ENCODE measurements at regions of chr3 and their contacts with region 1.

Region 1: GRCh38 chr3:14124615-14125190 is at the starts of genes CHCHD4 and TMEM43:
- DNase-seq: peak; percentile 94 to 96
- H3K4me3 ChIP-seq: peak within 1 kb of the TSS; percentile 90 to 97 (median 91)
- H3K27ac ChIP-seq: peak within 1 kb of the TSS; percentile 41
- H3K4me1 ChIP-seq: peaks cover 0 to 14% (median 10%) of the 10 kb centered on the region in 4 experiments; a peak in 6 of 7 replicates
- H3K27me3 ChIP-seq: no peaks in the 10 kb centered on the region
- CTCF ChIP-seq: no peak
- EP300 ChIP-seq: no peak
- POLR2A ChIP-seq: peak in 1 of 2 experiments; percentile 53; a peak in 2 of 3 replicates
- RAD21 ChIP-seq: no peak
- total RNA-seq, gene CHCHD4: 20.6 and 22.3 TPM in 2 replicates
- total RNA-seq, gene TMEM43: 27.0 and 27.4 TPM in 2 replicates

Region 2: GRCh38 chr3:13895155-13896105 is 229.3 kb before region 1 on chr3:
- CTCF ChIA-PET with region 1: interaction called, 123 read pairs
- POLR2A ChIA-PET with region 1: interaction called, 46 read pairs
- DNase-seq: peak; percentile 82 to 98
- H3K4me3 ChIP-seq: peak overlapping the region; percentile 57 to 79 (median 64)
- H3K27ac ChIP-seq: no peak overlapping the region
- H3K4me1 ChIP-seq: peaks cover 0 to 13% (median 8%) of the 10 kb centered on the region in 4 experiments; a peak in 4 of 7 replicates
- H3K27me3 ChIP-seq: peaks cover 8 to 24% (median 20%) of the 10 kb centered on the region in 4 experiments
- CTCF ChIP-seq: no peak
- EP300 ChIP-seq: no peak
- POLR2A ChIP-seq: no peak
- RAD21 ChIP-seq: no peak

Region 3: GRCh38 chr3:13932578-13933295 is 192.0 kb before region 1 on chr3:
- CTCF ChIA-PET with region 1: no interaction called
- POLR2A ChIA-PET with region 1: no interaction called
- DNase-seq: no peak
- H3K4me3 ChIP-seq: no peak overlapping the region
- H3K27ac ChIP-seq: no peak overlapping the region
- H3K4me1 ChIP-seq: no peaks in the 10 kb centered on the region
- H3K27me3 ChIP-seq: no peaks in the 10 kb centered on the region
- CTCF ChIP-seq: no peak
- EP300 ChIP-seq: no peak
- POLR2A ChIP-seq: no peak
- RAD21 ChIP-seq: no peak

Region 4: GRCh38 chr3:14113965-14114635 is 10.6 kb before region 1 on chr3:
- CTCF ChIA-PET with region 1: interaction called, 11 read pairs
- POLR2A ChIA-PET with region 1: interaction called, 14 read pairs
- DNase-seq: peak in 1 of 2 experiments; percentile 41
- H3K4me3 ChIP-seq: no peak overlapping the region
- H3K27ac ChIP-seq: no peak overlapping the region
- H3K4me1 ChIP-seq: no peaks in the 10 kb centered on the region
- H3K27me3 ChIP-seq: no peaks in the 10 kb centered on the region
- CTCF ChIP-seq: peak in 2 of 3 experiments; percentile 31 to 45; a peak in 3 of 4 replicates
- EP300 ChIP-seq: no peak
- POLR2A ChIP-seq: no peak
- RAD21 ChIP-seq: peak; percentile 58 to 75

Region 5: GRCh38 chr3:14137004-14137403 is 12.3 kb after region 1 on chr3:
- CTCF ChIA-PET with region 1: interaction called, 12 read pairs
- POLR2A ChIA-PET with region 1: interaction called, 32 read pairs
- DNase-seq: no peak
- H3K4me3 ChIP-seq: no peak overlapping the region
- H3K27ac ChIP-seq: no peak overlapping the region
- H3K4me1 ChIP-seq: no peaks in the 10 kb centered on the region
- H3K27me3 ChIP-seq: no peaks in the 10 kb centered on the region
- CTCF ChIP-seq: no peak
- EP300 ChIP-seq: no peak
- POLR2A ChIP-seq: no peak
- RAD21 ChIP-seq: no peak

Region 6: GRCh38 chr3:14144423-14145075 is 19.8 kb after region 1 on chr3:
- CTCF ChIA-PET with region 1: interaction called, 10 read pairs
- POLR2A ChIA-PET with region 1: interaction called, 32 read pairs
- DNase-seq: no peak
- H3K4me3 ChIP-seq: no peak overlapping the region
- H3K27ac ChIP-seq: peak overlapping the region; percentile 72; the same call in 1 of the 2 replicates
- H3K4me1 ChIP-seq: peaks cover 0 to 14% (median 9%) of the 10 kb centered on the region in 4 experiments; a peak in 6 of 7 replicates
- H3K27me3 ChIP-seq: no peaks in the 10 kb centered on the region
- CTCF ChIP-seq: no peak
- EP300 ChIP-seq: no peak
- POLR2A ChIP-seq: no peak
- RAD21 ChIP-seq: no peak

Region 7: DNA sequence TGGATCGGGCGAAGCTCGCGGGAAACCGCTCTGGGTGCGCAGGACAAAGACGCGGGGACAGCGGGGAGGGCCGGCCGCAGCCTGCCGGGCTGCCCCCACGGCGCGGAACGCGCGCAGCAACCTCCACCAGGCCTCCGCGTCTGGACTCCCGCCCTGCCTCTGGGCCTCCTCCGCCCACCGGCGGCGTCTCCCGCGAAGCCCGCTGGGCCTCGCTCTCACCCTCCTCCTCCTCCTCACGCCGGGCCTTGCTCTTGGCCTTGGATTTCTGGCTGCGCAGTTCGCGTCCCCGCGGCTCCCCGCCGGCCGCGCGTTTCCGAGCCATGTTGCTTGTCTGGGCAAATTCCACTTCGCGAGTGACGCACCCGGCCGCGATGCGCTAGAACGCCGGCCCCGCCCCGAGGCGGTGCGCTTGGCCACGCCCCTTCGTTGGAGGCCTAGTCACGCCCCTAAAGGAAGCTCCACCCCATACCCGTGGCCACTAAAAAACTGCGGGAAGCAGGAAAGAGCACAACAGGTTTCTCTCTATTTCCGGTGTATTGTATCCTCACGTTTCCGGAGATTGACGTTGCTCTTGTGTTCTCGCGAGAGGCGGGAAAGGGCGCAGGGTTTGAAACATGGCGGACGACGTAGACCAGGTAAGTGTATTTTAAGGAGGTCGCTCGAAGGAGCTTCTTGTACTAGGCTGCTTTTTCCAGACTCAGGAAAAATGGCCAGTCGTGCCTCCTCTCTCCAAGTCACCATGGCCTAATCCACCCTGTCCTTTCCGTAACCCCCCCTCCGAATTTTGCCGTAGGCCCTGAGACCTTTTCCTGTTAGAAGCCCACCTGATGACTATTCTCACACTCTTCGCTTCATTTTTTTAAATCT is 53.8 kb after region 1 on chr3 and contains the starts of genes LSM3 and XPC:
- CTCF ChIA-PET with region 1: no interaction called
- POLR2A ChIA-PET with region 1: interaction called, 13 read pairs
- DNase-seq: peak; percentile 85 to 96
- H3K4me3 ChIP-seq: peak within 1 kb of the TSS; percentile 84 to 91 (median 88)
- H3K27ac ChIP-seq: peak within 1 kb of the TSS; percentile 91
- H3K4me1 ChIP-seq: peaks cover 0 to 2% (median under 1%) of the 10 kb centered on the region in 4 experiments; a peak in 3 of 7 replicates
- H3K27me3 ChIP-seq: no peaks in the 10 kb centered on the region; a peak in 1 of 7 replicates
- CTCF ChIP-seq: no peak
- EP300 ChIP-seq: no peak
- POLR2A ChIP-seq: peak; percentile 69 to 94
- RAD21 ChIP-seq: no peak
- total RNA-seq, gene LSM3: 24.8 and 25.4 TPM in 2 replicates
- total RNA-seq, gene XPC: 27.3 and 27.7 TPM in 2 replicates

Measured in H1 (cell line).